ENCODE measurements at regions of chr17 and their contacts with region 1.

Region 1: GRCh38 chr17:18291718-18292540 is 22.9 kb downstream of the TOP3A start:
- DNase-seq: no peak
- H3K4me3 ChIP-seq: no peak overlapping the region
- CTCF ChIP-seq: no peak
- POLR2A ChIP-seq: no peak

Region 2: DNA sequence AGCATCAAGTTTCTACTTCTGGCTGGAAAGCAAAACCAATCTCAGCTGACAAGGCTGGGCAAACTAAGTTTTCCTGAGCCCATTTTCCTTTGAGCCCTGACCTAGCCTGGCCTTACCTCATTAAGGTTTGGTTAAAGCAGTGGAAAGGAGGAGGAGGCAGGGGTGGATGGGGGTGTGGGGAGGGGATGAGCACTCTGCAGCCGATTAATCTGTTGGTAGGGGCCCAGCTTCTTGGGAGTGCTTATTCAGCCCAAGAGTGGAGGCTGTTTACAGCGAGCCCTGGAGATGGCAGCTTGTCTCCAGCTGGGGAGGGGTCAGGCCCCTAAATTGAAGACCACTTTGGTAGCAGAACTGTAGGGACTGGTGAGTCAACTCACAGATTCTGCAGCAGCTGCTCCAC is 35.2 kb after region 1 on chr17:
- intact Hi-C with region 1: loop called (anchors 1 kb)
- DNase-seq: no peak
- H3K4me3 ChIP-seq: no peak overlapping the region
- CTCF ChIP-seq: no peak
- POLR2A ChIP-seq: no peak

Region 3: GRCh38 chr17:18382441-18383078 is 90.6 kb after region 1 on chr17:
- intact Hi-C with region 1: no loop called
- DNase-seq: no peak
- H3K4me3 ChIP-seq: no peak overlapping the region
- CTCF ChIP-seq: no peak
- POLR2A ChIP-seq: no peak